Activated CD4-positive, alpha-beta T cell treated with anti-CD3 and anti-CD28 coated beads for 36 hours (primary cell): ENCODE measurements at regions of chr12 and their contacts with region 1.

Region 1: GRCh38 chr12:103503977-103504376 is 8.2 kb upstream of the C12orf42 start:
- DNase-seq: peak; percentile 71
- ATAC-seq: no peak
- H3K4me3 Mint-ChIP-seq: no peak overlapping the region
- H3K27ac Mint-ChIP-seq: no peak overlapping the region
- H3K4me1 Mint-ChIP-seq: peaks cover 20% of the 10 kb centered on the region
- H3K27me3 Mint-ChIP-seq: peaks cover 5% of the 10 kb centered on the region

Region 2: DNA sequence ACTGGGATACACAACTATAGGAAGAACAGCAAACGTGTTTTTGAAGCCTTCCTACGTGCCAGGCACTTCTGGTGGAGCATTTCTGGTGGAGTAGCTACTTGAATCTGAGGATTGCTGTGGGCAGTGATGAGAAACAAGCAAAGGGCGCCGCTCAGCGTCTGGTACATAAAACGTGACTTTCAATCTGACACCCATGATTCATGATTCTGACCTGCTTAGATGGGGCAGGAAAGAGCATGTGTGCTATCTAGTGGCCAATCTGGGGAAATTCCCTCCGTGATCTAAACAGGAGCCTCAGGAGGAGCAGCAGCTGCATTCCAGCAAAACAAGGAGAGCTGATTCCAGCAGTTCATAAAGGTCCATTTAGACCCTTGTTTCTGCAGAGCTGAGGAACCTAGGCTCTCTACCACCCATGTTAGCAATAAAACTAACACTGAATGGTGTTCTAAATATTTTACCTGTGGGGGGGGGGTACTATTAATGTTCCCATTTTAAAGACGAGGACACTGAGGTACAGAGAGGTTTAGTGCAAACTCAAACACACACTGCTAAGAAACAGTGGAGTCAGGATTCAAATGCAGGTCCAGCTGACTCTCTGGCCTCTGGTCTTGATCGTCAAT is 624.7 kb before region 1 on chr12:
- CTCF ChIA-PET with region 1: no interaction called
- POLR2A ChIA-PET with region 1: no interaction called
- intact Hi-C with region 1: loop called in 1 of 2 experiments (anchors 1 kb)
- DNase-seq: peak; percentile 50
- ATAC-seq: peak; percentile 81
- H3K4me3 Mint-ChIP-seq: no peak overlapping the region
- H3K27ac Mint-ChIP-seq: no peak overlapping the region
- H3K4me1 Mint-ChIP-seq: no peaks in the 10 kb centered on the region
- H3K27me3 Mint-ChIP-seq: peaks cover 14% of the 10 kb centered on the region

Region 3: DNA sequence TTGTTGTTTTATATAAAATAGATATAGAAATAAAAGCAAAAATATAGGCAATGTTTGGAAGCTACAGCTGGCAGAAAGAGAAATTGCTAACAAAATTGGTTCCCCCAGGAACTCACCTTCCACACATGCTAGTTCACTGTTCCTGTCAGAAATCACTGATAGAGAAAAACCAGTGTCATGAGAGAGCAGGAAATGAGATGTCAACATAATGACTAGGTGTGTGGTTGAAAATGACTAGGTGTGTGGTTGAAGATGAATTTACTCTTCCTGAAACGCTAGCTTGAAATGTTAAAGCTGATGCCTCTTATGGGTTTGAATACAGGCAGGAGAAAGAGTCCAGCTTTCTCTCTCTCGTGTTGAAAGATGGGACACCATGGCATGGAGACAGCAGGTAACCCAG is 224.5 kb before region 1 on chr12:
- CTCF ChIA-PET with region 1: no interaction called
- POLR2A ChIA-PET with region 1: no interaction called
- intact Hi-C with region 1: loop called in 1 of 2 experiments (anchors 2 kb)
- DNase-seq: no peak
- ATAC-seq: peak; percentile 89
- H3K4me3 Mint-ChIP-seq: no peak overlapping the region
- H3K27ac Mint-ChIP-seq: no peak overlapping the region
- H3K4me1 Mint-ChIP-seq: peaks cover 5% of the 10 kb centered on the region
- H3K27me3 Mint-ChIP-seq: no peaks in the 10 kb centered on the region

Region 4: DNA sequence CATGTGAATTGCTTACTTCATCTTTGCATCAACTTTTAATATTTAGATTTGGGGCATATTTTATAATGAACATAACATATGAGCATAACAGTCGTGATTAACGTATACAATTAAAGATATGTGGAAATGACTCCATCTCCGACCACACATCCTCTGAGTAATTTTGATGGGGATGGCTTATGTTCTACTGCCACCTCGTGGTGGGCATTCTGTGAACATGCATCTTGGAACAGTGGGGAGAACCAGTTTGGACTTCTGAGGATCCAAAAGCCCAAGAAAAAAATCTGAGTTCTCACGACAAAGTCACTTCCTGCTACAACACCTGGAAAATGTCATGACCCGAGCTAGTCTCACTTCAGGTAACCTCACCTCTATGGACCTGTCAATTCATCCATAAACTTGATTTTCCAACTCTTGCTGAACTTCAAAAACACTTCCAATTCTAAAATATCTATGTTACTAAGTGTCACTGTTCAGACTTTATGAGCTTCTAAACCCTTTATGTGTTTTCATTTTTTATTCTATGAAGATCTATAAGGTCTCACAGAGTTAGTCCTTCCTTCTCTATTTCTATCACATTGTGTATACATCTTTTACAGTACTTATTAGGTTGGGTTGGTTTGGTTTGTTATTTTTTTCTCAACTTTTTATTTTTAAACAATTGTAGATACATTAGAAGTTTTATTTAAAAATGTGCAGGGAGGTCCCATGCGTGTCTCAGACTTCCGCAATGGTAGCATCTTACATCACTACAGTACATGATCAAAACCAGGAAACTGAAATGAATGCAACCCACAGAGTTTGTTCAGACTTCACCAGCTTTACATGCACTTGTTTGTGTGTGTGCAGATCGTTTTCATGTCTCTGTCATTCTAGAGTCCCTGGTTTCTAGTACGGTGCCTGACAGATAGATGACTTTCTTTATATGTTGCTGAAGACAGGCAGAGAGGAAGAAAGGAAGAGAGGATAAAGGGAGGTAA is 44.9 kb after region 1 on chr12:
- CTCF ChIA-PET with region 1: interaction called, 4 read pairs
- POLR2A ChIA-PET with region 1: no interaction called
- intact Hi-C with region 1: loop called in 1 of 2 experiments (anchors 2 kb)
- DNase-seq: peak; percentile 85
- ATAC-seq: peak; percentile 79
- H3K4me3 Mint-ChIP-seq: no peak overlapping the region
- H3K27ac Mint-ChIP-seq: no peak overlapping the region
- H3K4me1 Mint-ChIP-seq: peaks cover 5% of the 10 kb centered on the region
- H3K27me3 Mint-ChIP-seq: peaks cover 17% of the 10 kb centered on the region

Region 5: DNA sequence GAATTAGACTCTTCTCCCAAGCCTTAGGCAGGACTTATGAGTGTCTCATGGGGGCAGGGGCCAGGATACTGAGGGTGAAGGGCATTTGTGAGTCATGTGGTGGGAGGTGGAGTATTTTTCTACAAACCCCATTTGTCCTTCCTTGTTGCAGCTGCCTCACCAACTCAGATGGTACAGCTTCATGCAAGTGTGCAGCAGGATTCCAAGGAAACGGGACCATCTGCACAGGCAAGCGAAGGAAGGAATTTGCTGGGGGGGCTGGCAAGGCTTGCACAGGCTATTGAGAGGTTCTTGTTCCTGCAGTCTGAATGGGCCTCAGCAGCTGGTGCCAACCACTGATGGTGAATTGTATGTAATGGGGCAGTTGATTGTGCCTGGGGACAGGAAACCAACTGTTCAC is 208.2 kb after region 1 on chr12:
- CTCF ChIA-PET with region 1: no interaction called
- POLR2A ChIA-PET with region 1: no interaction called
- intact Hi-C with region 1: no loop called
- DNase-seq: no peak
- ATAC-seq: no peak
- H3K4me3 Mint-ChIP-seq: no peak overlapping the region
- H3K27ac Mint-ChIP-seq: no peak overlapping the region
- H3K4me1 Mint-ChIP-seq: no peaks in the 10 kb centered on the region
- H3K27me3 Mint-ChIP-seq: peaks cover 14% of the 10 kb centered on the region